ENCODE measurements at regions of chr15 and their contacts with region 1.

Region 1: GRCh38 chr15:34367101-34368081 is at the start of gene LPCAT4:
- DNase-seq: peak; percentile 92
- H3K27ac ChIP-seq: peak within 1 kb of the TSS; percentile 97
- CTCF ChIP-seq: peak; percentile 99

Region 2: GRCh38 chr15:34109797-34110663 is 257.4 kb before region 1 on chr15:
- CTCF ChIA-PET with region 1: interaction called, 4 read pairs
- POLR2A ChIA-PET with region 1: interaction called, 10 read pairs
- DNase-seq: peak; percentile 51
- H3K27ac ChIP-seq: no peak overlapping the region
- CTCF ChIP-seq: peak; percentile 90

Region 3: GRCh38 chr15:34262362-34262761 is 105.0 kb before region 1 on chr15:
- CTCF ChIA-PET with region 1: no interaction called
- POLR2A ChIA-PET with region 1: no interaction called
- DNase-seq: no peak
- H3K27ac ChIP-seq: no peak overlapping the region
- CTCF ChIP-seq: no peak

Region 4: DNA sequence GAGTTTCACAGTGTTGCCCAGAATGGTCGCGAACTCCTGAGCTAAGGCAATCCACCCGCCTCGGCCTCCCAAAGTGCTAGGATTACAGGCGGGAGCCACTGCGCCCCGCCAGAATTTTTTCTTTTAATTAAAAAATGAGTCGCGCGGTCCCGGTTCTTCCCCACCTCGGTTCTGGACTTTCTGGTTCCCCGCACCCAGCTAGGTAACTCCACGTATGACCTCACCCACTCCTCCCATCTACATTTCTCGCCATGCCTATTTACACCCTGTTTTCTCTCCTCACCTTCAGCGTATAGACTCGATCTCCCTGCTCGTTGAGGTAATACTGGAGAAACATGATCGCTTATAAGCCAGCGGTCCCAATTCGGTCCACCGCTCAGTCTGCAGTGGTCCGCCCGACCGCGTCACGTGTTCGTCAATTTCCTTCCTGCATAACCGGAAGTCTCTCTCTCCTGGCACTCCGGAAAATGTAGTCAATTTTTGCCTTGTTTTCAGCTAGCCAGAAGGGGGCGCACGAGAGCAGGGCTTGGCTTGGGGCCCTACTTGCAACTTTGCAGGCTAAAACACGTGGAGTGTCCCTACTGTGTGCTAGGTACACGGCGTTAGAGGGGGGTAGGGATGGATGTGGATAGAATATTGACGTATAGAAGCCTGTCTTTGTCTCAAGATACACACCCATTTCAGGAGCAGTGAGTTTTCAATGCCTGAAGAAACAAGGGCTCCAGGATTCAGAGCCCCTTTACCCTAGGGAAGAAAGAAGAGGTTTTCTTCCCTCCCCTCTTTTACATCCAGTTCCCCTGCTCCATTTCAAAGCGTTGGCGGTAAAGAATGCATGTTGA is 24.4 kb before region 1 on chr15 and contains the starts of genes NOP10 and NUTM1:
- CTCF ChIA-PET with region 1: interaction called, 22 read pairs
- POLR2A ChIA-PET with region 1: interaction called, 4 read pairs
- DNase-seq: peak; percentile 80
- H3K27ac ChIP-seq: peak within 1 kb of the TSS; percentile 88
- CTCF ChIP-seq: peak; percentile 98

Region 5: GRCh38 chr15:35000511-35000910 is 633.1 kb after region 1 on chr15:
- CTCF ChIA-PET with region 1: no interaction called
- POLR2A ChIA-PET with region 1: no interaction called
- DNase-seq: peak; percentile 94
- H3K27ac ChIP-seq: peak overlapping the region; percentile 83
- CTCF ChIP-seq: no peak

Measured in RWPE1 (cell line).